ENCODE measurements at regions of chr3 and their contacts with region 1.

Region 1: DNA sequence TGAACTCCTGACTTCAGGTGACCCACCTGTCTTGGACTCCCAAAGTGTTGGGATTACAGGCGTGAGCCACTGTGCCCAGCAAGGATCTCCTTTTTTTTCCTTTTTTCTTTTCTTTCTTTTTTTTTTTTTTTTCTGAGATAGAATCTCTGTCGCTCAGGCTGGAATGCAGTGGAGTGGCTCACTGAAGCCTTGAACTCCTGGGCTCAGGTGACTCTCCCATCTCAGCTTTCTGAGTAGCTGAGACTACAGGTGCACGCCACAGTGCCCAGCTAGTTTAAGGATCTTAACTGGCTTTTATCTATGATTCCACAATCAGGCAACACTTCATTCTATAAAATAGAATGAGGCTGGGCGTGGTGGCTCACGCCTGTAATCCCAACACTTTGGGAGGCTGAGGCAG is 16.3 kb upstream of the NICN1 start:
- DNase-seq: no peak
- ATAC-seq: no peak
- H3K4me3 Mint-ChIP-seq: no peak overlapping the region
- H3K27ac Mint-ChIP-seq: peak overlapping the region; percentile 43
- H3K4me1 Mint-ChIP-seq: peaks cover 20% of the 10 kb centered on the region
- H3K27me3 Mint-ChIP-seq: no peaks in the 10 kb centered on the region

Region 2: GRCh38 chr3:49428697-49429100 is 16.7 kb before region 1 on chr3:
- POLR2A ChIA-PET with region 1: interaction called, 14 read pairs
- DNase-seq: no peak
- ATAC-seq: no peak
- H3K4me3 Mint-ChIP-seq: peak overlapping the region; percentile 93
- H3K27ac Mint-ChIP-seq: peak overlapping the region; percentile 96
- H3K4me1 Mint-ChIP-seq: peaks cover 25% of the 10 kb centered on the region
- H3K27me3 Mint-ChIP-seq: no peaks in the 10 kb centered on the region